ENCODE measurements at regions of chr11 and their contacts with region 1.

Region 1: DNA sequence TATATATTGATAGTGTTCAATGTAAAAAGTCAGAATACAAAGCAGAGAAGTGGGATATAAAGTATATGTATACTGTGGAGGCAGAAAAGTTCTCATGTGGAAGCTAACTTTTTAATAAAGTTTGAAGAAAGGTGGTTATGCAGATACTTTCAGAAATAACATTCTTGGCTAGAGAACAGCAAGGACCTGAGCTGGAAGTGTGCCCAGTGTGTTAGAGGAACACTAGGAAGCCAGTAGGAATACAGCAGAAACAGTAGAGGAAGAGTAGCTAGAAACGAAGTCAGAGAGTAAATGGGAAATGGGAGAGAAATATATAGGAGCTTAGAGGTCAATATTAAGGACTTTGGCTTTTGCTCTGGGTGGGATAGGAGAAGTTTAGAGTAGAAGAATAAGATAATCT is 464.9 kb upstream of the CCDC90B start:
- DNase-seq: no peak
- ATAC-seq: no peak
- H3K4me3 ChIP-seq: no peak overlapping the region
- H3K4me3 Mint-ChIP-seq: no peak overlapping the region
- H3K27ac ChIP-seq: no peak overlapping the region
- H3K27ac Mint-ChIP-seq: no peak overlapping the region
- H3K4me1 ChIP-seq: no peaks in the 10 kb centered on the region
- H3K4me1 Mint-ChIP-seq: no peaks in the 10 kb centered on the region
- H3K27me3 ChIP-seq: no peaks in the 10 kb centered on the region
- H3K27me3 Mint-ChIP-seq: peaks cover 6 to 12% of the 10 kb centered on the region in 2 donors

Region 2: GRCh38 chr11:83713701-83714100 is 37.3 kb before region 1 on chr11:
- CTCF ChIA-PET with region 1: no interaction called
- POLR2A ChIA-PET with region 1: no interaction called
- DNase-seq: no peak
- ATAC-seq: no peak
- H3K4me3 ChIP-seq: no peak overlapping the region
- H3K4me3 Mint-ChIP-seq: no peak overlapping the region
- H3K27ac ChIP-seq: no peak overlapping the region
- H3K27ac Mint-ChIP-seq: no peak overlapping the region
- H3K4me1 ChIP-seq: no peaks in the 10 kb centered on the region
- H3K4me1 Mint-ChIP-seq: no peaks in the 10 kb centered on the region
- H3K27me3 ChIP-seq: no peaks in the 10 kb centered on the region
- H3K27me3 Mint-ChIP-seq: peaks cover 2 to 9% of the 10 kb centered on the region in 2 donors

Region 3: DNA sequence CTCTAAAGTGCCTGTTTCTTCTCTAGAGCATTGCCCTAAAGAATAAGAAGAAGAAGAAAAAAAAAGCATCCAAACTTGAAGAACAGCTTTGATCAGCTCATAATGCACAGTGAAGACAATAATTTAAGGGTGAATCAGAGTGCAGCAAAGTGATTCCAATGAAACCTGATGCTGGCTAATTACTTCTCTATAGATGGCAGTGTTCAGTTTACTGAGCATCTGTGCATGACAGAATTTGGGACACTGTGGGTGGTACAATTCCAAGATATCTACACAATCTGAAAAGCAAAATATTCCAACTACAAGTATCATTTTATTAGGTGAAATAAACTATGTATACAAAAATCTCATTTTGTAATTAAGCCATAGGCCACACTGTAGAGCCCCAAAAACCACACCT is 14.4 kb before region 1 on chr11:
- CTCF ChIA-PET with region 1: interaction called in 1 of 2 experiments, 10 read pairs
- POLR2A ChIA-PET with region 1: no interaction called
- DNase-seq: no peak
- ATAC-seq: no peak
- H3K4me3 ChIP-seq: no peak overlapping the region
- H3K4me3 Mint-ChIP-seq: no peak overlapping the region
- H3K27ac ChIP-seq: no peak overlapping the region
- H3K27ac Mint-ChIP-seq: no peak overlapping the region
- H3K4me1 ChIP-seq: no peaks in the 10 kb centered on the region
- H3K4me1 Mint-ChIP-seq: no peaks in the 10 kb centered on the region
- H3K27me3 ChIP-seq: no peaks in the 10 kb centered on the region
- H3K27me3 Mint-ChIP-seq: peaks cover 0 to 19% of the 10 kb centered on the region in 2 donors

Measured in T-cell (primary cell).